ENCODE measurements at regions of chr20 and their contacts with region 1.

Region 1: DNA sequence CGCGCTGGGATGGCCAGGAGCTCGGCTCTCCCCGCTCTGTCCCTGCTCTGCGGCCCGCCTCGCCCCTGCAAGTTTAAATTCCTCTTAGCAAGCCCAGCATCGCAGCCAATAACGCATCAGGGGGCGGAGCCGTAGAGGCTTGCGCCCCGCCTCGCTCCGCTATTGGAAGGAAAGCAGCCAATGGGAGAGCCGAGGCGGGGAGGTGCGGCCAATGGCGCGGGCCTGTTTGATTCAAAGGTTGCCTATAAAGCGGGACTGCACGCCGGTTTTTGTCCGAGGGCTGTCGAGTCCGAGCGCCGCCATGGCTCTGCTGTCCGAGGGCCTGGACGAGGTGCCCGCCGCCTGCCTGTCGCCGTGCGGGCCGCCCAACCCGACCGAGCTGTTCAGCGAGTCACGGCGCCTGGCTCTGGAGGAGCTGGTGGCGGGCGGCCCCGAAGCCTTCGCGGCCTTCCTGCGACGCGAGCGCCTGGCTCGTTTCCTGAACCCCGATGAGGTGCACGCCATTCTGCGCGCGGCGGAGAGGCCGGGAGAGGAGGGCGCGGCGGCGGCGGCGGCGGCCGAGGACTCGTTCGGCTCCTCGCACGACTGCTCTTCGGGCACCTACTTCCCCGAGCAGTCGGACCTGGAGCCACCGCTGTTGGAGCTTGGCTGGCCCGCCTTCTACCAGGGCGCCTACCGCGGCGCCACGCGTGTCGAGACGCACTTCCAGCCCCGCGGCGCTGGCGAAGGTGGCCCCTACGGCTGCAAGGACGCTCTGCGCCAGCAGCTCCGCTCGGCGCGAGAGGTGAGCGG is at the start of gene FAM83D:
- DNase-seq: peak; percentile 96
- H3K4me3 ChIP-seq: peak within 1 kb of the TSS; percentile 77
- H3K27ac ChIP-seq: peak within 1 kb of the TSS; percentile 46
- H3K4me1 ChIP-seq: no peaks in the 10 kb centered on the region
- H3K27me3 ChIP-seq: no peaks in the 10 kb centered on the region
- CTCF ChIP-seq: no peak
- total RNA-seq, gene FAM83D: 25.5 to 32.6 TPM

Region 2: GRCh38 chr20:39049684-39050554 is 123.6 kb after region 1 on chr20:
- intact Hi-C with region 1: loop called (anchors 2 kb)
- DNase-seq: peak; percentile 82
- H3K4me3 ChIP-seq: peak overlapping the region; percentile 52
- H3K27ac ChIP-seq: no peak overlapping the region
- H3K4me1 ChIP-seq: no peaks in the 10 kb centered on the region
- H3K27me3 ChIP-seq: no peaks in the 10 kb centered on the region
- CTCF ChIP-seq: peak; percentile 98